ENCODE measurements at regions of chr2 and their contacts with region 1.

Region 1: GRCh38 chr2:112542123-112542983 is at the start of gene POLR1B:
- DNase-seq: peak in 8 of 9 experiments; percentile 56 to 86 (median 75)
- ATAC-seq: peak; percentile 78
- H3K4me3 ChIP-seq: peak within 1 kb of the TSS; percentile 90
- H3K4me3 Mint-ChIP-seq: no peak within 1 kb of the TSS
- H3K27ac ChIP-seq: peak within 1 kb of the TSS; percentile 90 to 96
- H3K27ac Mint-ChIP-seq: no peak within 1 kb of the TSS
- H3K4me1 ChIP-seq: peaks cover 17% of the 10 kb centered on the region
- H3K4me1 Mint-ChIP-seq: peaks cover 26% of the 10 kb centered on the region
- H3K27me3 ChIP-seq: no peaks in the 10 kb centered on the region
- H3K27me3 Mint-ChIP-seq: no peaks in the 10 kb centered on the region
- CTCF ChIP-seq: no peak
- total RNA-seq, gene POLR1B: 10.0 to 11.0 TPM

Region 2: DNA sequence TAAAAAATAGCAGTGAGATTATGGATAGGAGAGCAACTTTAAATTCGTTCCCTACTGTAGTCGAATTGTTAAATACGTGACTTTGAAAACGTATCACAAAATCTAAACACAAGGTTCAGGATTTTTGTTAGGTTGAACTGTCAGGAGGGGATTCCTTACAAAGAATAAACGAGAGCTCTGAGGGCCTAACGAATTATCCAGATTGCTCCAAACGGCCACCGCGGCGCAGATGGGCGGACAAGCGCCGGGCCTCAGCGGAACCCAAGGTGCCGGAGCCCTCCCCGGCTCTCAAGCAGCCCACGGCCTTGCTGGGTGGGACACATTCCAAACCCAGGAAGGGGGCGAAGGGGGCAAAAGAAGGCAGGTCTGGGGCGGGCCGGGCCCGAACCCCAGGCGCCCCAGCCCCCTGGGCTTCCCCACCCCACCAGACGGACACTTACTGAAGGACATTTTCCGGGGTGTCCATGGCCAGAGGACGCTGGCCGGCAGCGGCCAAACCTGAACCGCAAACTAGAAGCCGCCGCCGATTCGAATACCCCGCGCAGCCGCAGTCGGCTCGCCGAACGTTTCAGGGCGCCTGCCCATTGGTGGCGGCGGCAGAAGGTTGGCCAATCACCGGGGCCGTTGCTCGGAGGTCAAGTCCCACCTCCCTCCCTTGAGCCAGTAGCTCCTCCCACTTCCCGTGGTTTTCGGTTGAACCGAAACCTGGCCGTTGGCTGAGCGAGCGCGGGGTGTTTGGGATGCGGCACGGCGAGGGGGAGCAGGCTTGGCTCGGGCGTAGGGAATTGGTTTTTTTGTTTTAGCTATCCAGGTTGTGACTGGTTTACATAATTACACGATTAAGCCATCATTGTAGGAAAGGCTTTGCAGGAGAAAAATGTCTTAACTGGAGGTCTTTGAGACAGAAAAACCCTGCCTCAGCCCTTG is 1864.6 kb before region 1 on chr2 and contains the start of gene BUB1:
- CTCF ChIA-PET with region 1: no interaction called
- POLR2A ChIA-PET with region 1: no interaction called
- intact Hi-C with region 1: loop called in 1 of 2 experiments (anchors 10 kb)
- DNase-seq: peak; percentile 87 to 98 (median 95)
- ATAC-seq: peak; percentile 95
- H3K4me3 ChIP-seq: peak within 1 kb of the TSS; percentile 65 to 91
- H3K4me3 Mint-ChIP-seq: peak within 1 kb of the TSS; percentile 96
- H3K27ac ChIP-seq: peak within 1 kb of the TSS; percentile 66 to 67
- H3K27ac Mint-ChIP-seq: peak within 1 kb of the TSS; percentile 93
- H3K4me1 ChIP-seq: peaks cover 13% of the 10 kb centered on the region
- H3K4me1 Mint-ChIP-seq: peaks cover 27% of the 10 kb centered on the region
- H3K27me3 ChIP-seq: peaks cover 0 to 2% of the 10 kb centered on the region in 2 experiments
- H3K27me3 Mint-ChIP-seq: no peaks in the 10 kb centered on the region
- CTCF ChIP-seq: no peak
- total RNA-seq, gene BUB1: 2.4 to 3.1 TPM

Region 3: DNA sequence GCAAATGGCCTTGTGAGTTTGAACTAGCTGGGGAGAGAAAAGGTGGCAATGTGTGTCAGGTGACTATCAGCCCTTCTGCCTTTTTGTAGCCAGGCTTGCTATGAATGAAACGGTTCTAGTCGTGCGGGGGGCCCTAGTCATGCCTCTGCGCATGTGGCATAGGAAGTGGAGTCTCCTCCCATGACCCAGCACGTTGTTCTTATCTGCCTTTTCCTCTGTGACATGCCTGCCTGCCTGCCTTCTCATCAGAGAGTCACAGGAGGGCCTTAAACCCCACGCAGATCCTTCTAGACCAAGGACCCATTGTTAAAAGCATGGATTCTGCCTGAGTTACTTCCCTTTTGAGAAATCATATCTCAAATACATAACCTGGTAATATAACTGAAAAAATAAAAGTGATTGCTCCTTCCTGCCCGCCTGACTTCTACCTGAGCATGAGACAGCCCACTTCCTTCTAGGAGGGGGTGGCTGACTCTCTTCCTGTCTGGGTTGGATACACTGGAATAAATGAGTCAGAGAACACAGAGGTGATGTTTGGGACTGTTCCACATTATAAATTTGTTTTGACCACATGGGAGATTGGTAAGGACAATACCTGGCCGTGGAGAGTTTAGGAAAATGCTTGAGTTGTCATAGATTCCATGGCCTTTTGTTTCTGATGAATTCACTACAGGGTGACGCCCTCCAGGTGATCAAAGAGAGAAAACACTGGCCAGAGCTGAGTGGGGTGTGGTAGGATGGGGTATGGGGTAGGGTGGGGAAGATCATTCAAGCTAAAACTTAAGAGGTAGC is 354.4 kb before region 1 on chr2:
- CTCF ChIA-PET with region 1: no interaction called
- POLR2A ChIA-PET with region 1: no interaction called
- intact Hi-C with region 1: loop called in 1 of 2 experiments (anchors 5 kb)
- DNase-seq: peak; percentile 30 to 85 (median 77)
- ATAC-seq: peak; percentile 82
- H3K4me3 ChIP-seq: peak overlapping the region; percentile 16 to 23
- H3K4me3 Mint-ChIP-seq: peak overlapping the region; percentile 59
- H3K27ac ChIP-seq: peak overlapping the region; percentile 72 to 94
- H3K27ac Mint-ChIP-seq: peak overlapping the region; percentile 100
- H3K4me1 ChIP-seq: peaks cover 31% of the 10 kb centered on the region
- H3K4me1 Mint-ChIP-seq: peaks cover 63% of the 10 kb centered on the region
- H3K27me3 ChIP-seq: no peaks in the 10 kb centered on the region
- H3K27me3 Mint-ChIP-seq: no peaks in the 10 kb centered on the region
- CTCF ChIP-seq: no peak

Region 4: DNA sequence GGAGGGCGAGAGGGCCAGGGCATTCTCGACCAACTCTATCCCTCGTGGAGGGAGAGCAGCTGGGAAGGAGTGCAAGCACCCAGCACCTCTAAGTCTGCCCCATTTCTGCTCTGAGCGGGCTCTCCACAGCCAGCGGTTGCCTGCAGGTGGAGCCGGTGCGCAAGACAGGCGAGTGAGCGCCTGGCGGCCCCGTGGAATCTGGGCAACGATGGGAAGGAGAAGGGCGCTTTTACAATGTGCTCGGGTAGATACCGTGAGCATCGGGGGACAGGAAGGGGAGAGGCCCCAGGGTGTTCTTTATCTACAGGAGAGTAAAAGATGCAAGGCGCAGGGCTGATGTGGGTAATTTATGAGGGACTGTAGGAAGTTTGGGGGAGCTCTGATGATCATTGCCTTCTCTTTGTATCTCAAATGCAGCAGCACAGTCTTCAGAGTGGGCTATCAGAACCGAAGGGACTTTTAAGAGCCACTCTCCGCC is 61.3 kb before region 1 on chr2:
- CTCF ChIA-PET with region 1: no interaction called
- POLR2A ChIA-PET with region 1: interaction called, 3 read pairs
- intact Hi-C with region 1: loop called (anchors 1 kb)
- DNase-seq: peak; percentile 63 to 90 (median 84)
- ATAC-seq: peak; percentile 78
- H3K4me3 ChIP-seq: peak overlapping the region; percentile 56 to 87
- H3K4me3 Mint-ChIP-seq: peak overlapping the region; percentile 95
- H3K27ac ChIP-seq: peak overlapping the region; percentile 30 to 53
- H3K27ac Mint-ChIP-seq: peak overlapping the region; percentile 93
- H3K4me1 ChIP-seq: peaks cover 16% of the 10 kb centered on the region
- H3K4me1 Mint-ChIP-seq: peaks cover 21% of the 10 kb centered on the region
- H3K27me3 ChIP-seq: no peaks in the 10 kb centered on the region
- H3K27me3 Mint-ChIP-seq: no peaks in the 10 kb centered on the region
- CTCF ChIP-seq: peak; percentile 76

Region 5: DNA sequence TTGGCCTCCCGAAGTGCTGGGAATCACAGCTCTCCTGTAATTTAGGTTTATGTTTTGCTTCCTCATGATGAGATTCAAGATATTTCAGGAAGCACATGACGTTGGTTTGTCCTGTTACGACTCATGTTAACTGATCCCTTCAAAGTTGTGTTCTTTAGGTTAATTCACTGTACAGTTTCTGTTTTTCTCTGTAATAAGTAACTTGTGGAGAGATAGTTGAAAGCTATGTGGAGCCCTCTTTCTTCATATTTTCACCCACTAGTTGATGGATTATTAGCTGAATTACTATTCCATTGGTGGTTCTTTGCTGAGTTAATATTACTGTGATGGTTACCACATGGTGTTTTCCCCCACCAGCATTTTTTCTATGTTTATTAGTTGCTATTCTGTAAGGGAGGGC is 23.8 kb after region 1 on chr2:
- CTCF ChIA-PET with region 1: no interaction called
- POLR2A ChIA-PET with region 1: no interaction called
- intact Hi-C with region 1: no loop called
- DNase-seq: no peak
- ATAC-seq: no peak
- H3K4me3 ChIP-seq: no peak overlapping the region
- H3K4me3 Mint-ChIP-seq: no peak overlapping the region
- H3K27ac ChIP-seq: no peak overlapping the region
- H3K27ac Mint-ChIP-seq: no peak overlapping the region
- H3K4me1 ChIP-seq: no peaks in the 10 kb centered on the region
- H3K4me1 Mint-ChIP-seq: no peaks in the 10 kb centered on the region
- H3K27me3 ChIP-seq: no peaks in the 10 kb centered on the region
- H3K27me3 Mint-ChIP-seq: no peaks in the 10 kb centered on the region
- CTCF ChIP-seq: no peak

Region 6: DNA sequence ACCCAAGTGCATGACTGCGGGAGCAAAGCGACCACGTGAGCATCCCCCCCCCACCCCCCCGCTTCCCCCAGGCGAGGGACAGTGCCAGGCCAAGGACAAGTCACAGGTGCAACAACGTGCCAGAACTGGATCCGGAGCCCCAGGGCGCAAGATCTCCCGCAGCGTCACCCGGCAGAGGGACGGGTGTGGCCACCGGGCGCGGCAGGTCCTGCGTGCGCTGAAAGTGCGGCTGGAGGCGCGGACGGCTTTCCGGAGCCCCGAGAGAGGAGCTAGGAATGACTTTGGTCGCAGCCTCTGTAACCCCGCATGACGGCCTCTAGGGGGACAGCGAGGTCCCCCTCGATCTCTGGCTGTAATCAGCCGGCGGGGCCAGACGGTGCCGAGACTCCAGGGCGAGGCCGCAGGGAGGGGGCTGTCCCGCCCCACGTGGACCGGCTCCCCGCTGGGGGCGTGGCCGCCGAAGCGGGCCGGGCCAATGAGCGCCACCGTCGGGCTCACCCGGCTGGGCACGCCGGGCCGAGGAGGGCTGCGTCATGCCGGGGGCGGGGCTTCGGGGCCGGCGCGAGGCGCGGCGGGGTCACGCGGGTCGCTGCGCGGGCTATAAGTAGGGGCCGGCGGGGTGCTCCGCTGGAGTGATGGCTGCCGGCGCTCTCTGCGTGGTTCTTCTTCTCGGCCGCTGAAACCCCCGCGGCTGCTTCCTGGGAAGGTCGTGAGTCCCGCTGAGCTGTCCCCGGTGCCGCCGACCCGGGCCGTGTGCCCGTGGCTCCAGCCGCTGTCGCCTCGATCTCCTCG is 103.2 kb after region 1 on chr2 and contains the start of gene SLC20A1:
- CTCF ChIA-PET with region 1: no interaction called
- POLR2A ChIA-PET with region 1: no interaction called
- intact Hi-C with region 1: loop called in 1 of 2 experiments (anchors 5 kb)
- DNase-seq: peak; percentile 96 to 100 (median 98)
- ATAC-seq: peak; percentile 91
- H3K4me3 ChIP-seq: peak within 1 kb of the TSS; percentile 84 to 90
- H3K4me3 Mint-ChIP-seq: peak within 1 kb of the TSS; percentile 85
- H3K27ac ChIP-seq: peak within 1 kb of the TSS; percentile 91
- H3K27ac Mint-ChIP-seq: peak within 1 kb of the TSS; percentile 89
- H3K4me1 ChIP-seq: peaks cover 50% of the 10 kb centered on the region
- H3K4me1 Mint-ChIP-seq: peaks cover 56% of the 10 kb centered on the region
- H3K27me3 ChIP-seq: no peaks in the 10 kb centered on the region
- H3K27me3 Mint-ChIP-seq: no peaks in the 10 kb centered on the region
- CTCF ChIP-seq: peak; percentile 55
- total RNA-seq, gene SLC20A1: 144 to 145 TPM

Region 7: GRCh38 chr2:113756355-113757137 is 1214.2 kb after region 1 on chr2 and contains the start of gene SLC35F5:
- CTCF ChIA-PET with region 1: no interaction called
- POLR2A ChIA-PET with region 1: no interaction called
- intact Hi-C with region 1: loop called in 1 of 2 experiments (anchors 10 kb)
- DNase-seq: peak; percentile 86 to 98 (median 94)
- ATAC-seq: peak; percentile 90
- H3K4me3 ChIP-seq: peak within 1 kb of the TSS; percentile 82 to 88
- H3K4me3 Mint-ChIP-seq: peak within 1 kb of the TSS; percentile 98
- H3K27ac ChIP-seq: peak within 1 kb of the TSS; percentile 97 to 99
- H3K27ac Mint-ChIP-seq: peak within 1 kb of the TSS; percentile 100
- H3K4me1 ChIP-seq: peaks cover 12% of the 10 kb centered on the region
- H3K4me1 Mint-ChIP-seq: peaks cover 30% of the 10 kb centered on the region
- H3K27me3 ChIP-seq: no peaks in the 10 kb centered on the region
- H3K27me3 Mint-ChIP-seq: no peaks in the 10 kb centered on the region
- CTCF ChIP-seq: no peak
- total RNA-seq, gene SLC35F5: 19.3 to 20.7 TPM

Measured in CD8-positive, alpha-beta T cell (primary cell).